Activated CD4-positive, alpha-beta T cell treated with anti-CD3 and anti-CD28 coated beads for 36 hours (primary cell): ENCODE measurements at regions of chr2 and their contacts with region 1.

Region 1: GRCh38 chr2:190648289-190649034 is 421 bp upstream of the NAB1 start:
- DNase-seq: peak; percentile 88
- ATAC-seq: peak; percentile 54
- H3K4me3 Mint-ChIP-seq: peak overlapping the region; percentile 67
- H3K27ac Mint-ChIP-seq: peak overlapping the region; percentile 81
- H3K4me1 Mint-ChIP-seq: peaks cover 46% of the 10 kb centered on the region
- H3K27me3 Mint-ChIP-seq: no peaks in the 10 kb centered on the region

Region 2: DNA sequence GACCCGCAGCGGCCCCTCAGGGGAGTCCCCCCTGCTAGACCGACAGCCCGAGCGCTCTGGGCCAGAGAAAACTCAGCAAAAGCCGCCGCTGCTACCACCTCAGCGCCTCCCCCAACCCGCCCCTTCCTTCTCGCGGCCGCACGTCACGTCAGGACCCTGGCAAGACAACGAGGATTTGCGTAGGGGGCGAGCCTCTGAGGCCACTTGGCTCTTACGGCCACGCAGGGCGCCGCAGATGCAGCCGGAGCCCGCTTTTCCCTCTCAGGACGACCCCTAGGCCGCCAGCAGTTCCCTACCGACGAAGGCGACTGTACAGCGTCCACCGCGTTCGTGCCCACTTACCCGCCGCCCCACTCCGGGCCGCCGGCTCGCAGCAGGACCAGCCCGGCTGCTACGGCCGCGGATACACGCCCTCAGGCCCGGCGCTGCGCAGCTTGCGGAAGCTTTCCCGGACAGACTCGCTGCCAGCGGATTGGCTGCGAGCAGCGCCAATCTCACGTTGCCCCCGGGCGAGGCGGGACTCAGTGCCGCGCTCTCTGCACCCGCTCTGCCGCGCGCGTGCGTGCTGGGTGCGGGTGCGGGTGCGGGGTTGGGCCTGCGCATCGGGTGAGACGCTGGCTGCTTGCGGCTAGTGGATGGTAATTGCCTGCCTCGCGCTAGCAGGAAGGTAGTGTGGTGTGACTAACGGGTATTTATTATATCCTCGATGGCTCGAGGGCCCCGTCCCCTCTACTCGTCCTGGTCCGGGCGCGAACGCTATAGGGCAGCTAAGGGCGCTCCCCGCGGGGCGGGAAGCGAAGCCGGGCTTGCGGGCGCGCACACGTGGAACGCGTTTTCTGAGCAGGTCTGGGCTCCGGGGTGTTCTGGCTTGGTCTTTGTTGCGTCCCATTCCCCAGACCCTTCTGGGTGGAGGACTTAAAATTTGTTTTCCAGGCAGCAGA is 864.3 kb before region 1 on chr2 and contains the starts of genes ORMDL1 and PMS1:
- CTCF ChIA-PET with region 1: no interaction called
- POLR2A ChIA-PET with region 1: no interaction called
- intact Hi-C with region 1: loop called in 1 of 2 experiments (anchors 1 kb)
- DNase-seq: peak; percentile 96
- ATAC-seq: peak; percentile 92
- H3K4me3 Mint-ChIP-seq: peak within 1 kb of the TSS; percentile 74
- H3K27ac Mint-ChIP-seq: peak within 1 kb of the TSS; percentile 94
- H3K4me1 Mint-ChIP-seq: peaks cover 52% of the 10 kb centered on the region
- H3K27me3 Mint-ChIP-seq: no peaks in the 10 kb centered on the region
- total RNA-seq, gene ORMDL1: 45.2 to 49.2 TPM
- total RNA-seq, gene PMS1: 45.8 to 47.4 TPM

Region 3: DNA sequence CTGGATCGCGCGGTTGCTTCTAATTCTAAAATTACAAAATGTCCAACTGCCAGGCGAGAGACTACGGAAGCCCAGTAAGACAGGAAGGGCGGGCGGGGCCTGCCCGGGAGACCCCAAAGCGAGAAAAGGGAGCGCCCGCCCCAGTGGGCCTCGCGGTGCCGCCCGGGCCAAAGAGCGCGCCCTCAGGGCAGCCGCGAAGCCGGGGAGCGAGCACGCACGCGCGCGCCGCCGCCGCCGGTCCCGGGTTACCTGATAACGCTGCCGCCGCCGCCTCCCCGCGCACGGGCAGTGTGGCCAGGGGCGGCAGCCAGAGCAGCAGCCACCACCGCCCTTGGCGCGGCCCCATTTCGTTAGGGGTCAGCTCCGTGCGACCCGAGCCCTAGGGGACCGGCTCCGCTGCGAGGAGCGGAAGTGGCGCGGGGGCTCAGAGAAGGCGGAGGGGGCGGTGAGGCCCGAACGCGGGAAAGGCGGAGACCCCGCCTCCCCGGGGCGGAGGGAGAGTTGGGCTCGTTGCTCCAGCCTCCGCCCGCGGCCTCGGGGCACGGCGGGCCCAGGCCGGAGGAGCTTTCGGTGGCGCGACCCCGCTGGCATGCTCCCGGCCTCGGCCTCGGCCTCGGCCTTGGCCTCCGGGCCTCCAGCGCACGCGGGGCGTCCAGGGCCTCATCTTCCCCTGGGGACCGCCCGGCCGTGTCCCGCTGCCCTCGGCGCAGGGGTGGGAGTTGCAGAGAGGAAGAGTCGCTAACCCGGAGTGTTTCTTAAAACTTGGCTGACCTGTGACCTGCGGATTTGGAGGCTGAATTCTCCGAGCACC is 113.9 kb before region 1 on chr2 and contains the start of gene NEMP2:
- CTCF ChIA-PET with region 1: interaction called, 3 read pairs
- POLR2A ChIA-PET with region 1: no interaction called
- intact Hi-C with region 1: loop called (anchors 1 kb)
- DNase-seq: peak; percentile 87
- ATAC-seq: peak; percentile 70
- H3K4me3 Mint-ChIP-seq: peak within 1 kb of the TSS; percentile 95
- H3K27ac Mint-ChIP-seq: peak within 1 kb of the TSS; percentile 98
- H3K4me1 Mint-ChIP-seq: peaks cover 52% of the 10 kb centered on the region
- H3K27me3 Mint-ChIP-seq: no peaks in the 10 kb centered on the region
- total RNA-seq, gene NEMP2: 24.6 to 25.1 TPM

Region 4: DNA sequence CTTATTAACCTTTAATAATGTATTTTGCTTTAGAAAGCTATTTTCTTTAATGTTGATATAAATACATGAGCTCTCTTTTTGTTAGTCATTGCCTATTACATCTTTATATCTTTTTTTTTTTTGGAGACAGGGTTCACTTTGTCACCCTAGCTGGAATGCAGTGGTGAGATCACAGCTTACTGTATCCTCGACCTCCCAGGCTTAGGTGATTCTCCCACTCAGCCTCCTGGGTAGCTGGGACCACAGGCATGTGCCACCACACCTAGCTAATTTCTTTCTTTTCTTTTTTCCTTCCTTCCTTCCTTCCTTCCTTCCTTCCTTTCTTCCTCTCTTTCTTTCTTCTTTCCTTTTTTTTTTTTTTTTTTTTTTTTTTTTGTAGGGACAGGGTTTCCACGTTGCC is 15.8 kb after region 1 on chr2:
- CTCF ChIA-PET with region 1: interaction called, 31 read pairs
- POLR2A ChIA-PET with region 1: interaction called, 14 read pairs
- intact Hi-C with region 1: no loop called
- DNase-seq: no peak
- ATAC-seq: peak; percentile 25
- H3K4me3 Mint-ChIP-seq: no peak overlapping the region
- H3K27ac Mint-ChIP-seq: no peak overlapping the region
- H3K4me1 Mint-ChIP-seq: peaks cover 60% of the 10 kb centered on the region
- H3K27me3 Mint-ChIP-seq: no peaks in the 10 kb centered on the region

Region 5: DNA sequence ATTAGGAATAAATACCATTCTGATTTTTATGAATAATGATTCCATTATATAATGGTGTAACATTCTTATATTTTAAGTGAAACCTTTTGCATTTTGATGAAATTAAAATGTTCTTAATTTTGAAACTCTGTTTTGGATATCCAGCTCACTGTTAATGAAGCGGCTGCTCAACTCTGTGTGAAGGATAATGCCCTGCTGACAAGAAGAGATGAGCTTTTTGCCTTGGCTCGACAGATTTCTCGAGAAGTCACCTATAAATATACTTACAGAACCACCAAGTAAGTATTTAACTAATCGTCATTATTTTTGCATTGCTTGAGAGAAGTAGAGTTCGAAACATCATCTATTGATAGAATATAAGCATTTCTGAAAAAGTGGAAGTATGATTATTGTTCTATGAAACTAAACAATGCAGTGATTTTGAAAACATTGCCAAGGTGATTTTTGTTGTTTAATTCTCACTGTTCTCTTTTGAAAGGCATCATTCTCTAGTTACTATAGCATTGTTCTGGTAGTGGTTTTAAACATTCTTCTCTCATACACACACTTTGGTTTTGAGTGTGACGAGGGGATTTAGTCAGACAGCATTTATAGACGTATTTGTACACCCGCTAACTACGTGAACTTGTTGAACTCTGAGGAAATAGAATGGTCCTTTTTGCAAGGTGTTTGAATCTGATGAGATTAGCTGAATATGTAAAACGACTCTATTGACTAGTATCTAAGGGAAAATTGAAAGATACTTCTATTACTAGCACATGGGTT is 21.9 kb after region 1 on chr2:
- CTCF ChIA-PET with region 1: interaction called, 5 read pairs
- POLR2A ChIA-PET with region 1: interaction called, 14 read pairs
- intact Hi-C with region 1: no loop called
- DNase-seq: no peak
- ATAC-seq: peak; percentile 53
- H3K4me3 Mint-ChIP-seq: no peak overlapping the region
- H3K27ac Mint-ChIP-seq: no peak overlapping the region
- H3K4me1 Mint-ChIP-seq: peaks cover 55% of the 10 kb centered on the region
- H3K27me3 Mint-ChIP-seq: no peaks in the 10 kb centered on the region

Region 6: DNA sequence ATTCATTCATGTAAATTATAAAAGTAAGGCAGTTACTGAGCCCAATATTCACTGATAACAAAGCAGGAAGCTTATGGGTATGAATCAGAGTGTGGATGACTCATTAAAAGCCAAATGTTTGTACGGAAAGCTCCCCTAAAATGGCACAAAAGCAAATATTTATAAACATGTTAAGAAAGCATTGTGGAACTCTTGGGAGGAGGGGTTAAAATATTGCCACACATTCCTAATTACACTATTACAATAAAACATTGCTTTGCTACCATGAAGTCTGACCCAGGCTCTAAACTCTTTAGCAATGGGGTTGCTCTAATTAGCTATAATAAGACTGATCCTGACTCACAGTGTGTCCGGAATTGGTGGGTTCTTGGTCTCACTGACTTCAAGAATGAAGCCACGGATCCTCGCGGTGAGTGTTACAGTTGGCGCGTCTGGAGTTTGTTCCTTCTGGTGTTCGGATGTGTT is 111.3 kb after region 1 on chr2:
- CTCF ChIA-PET with region 1: interaction called, 3 read pairs
- POLR2A ChIA-PET with region 1: no interaction called
- intact Hi-C with region 1: loop called (anchors 2 to 5 kb)
- DNase-seq: no peak
- ATAC-seq: no peak
- H3K4me3 Mint-ChIP-seq: peak overlapping the region; percentile 15
- H3K27ac Mint-ChIP-seq: no peak overlapping the region
- H3K4me1 Mint-ChIP-seq: peaks cover 54% of the 10 kb centered on the region
- H3K27me3 Mint-ChIP-seq: no peaks in the 10 kb centered on the region

Region 7: GRCh38 chr2:191103774-191104173 is 455.3 kb after region 1 on chr2:
- CTCF ChIA-PET with region 1: no interaction called
- POLR2A ChIA-PET with region 1: no interaction called
- intact Hi-C with region 1: no loop called
- DNase-seq: no peak
- ATAC-seq: peak; percentile 71
- H3K4me3 Mint-ChIP-seq: no peak overlapping the region
- H3K27ac Mint-ChIP-seq: no peak overlapping the region
- H3K4me1 Mint-ChIP-seq: peaks cover 64% of the 10 kb centered on the region
- H3K27me3 Mint-ChIP-seq: no peaks in the 10 kb centered on the region